Calu3 (cell line): ENCODE measurements at regions of chr1 and their contacts with region 1.

Region 1: GRCh38 chr1:201019321-201019977 is 4.1 kb downstream of the KIF21B start:
- DNase-seq: peak; percentile 83
- H3K4me3 Mint-ChIP-seq: peak overlapping the region; percentile 26
- H3K27ac Mint-ChIP-seq: peak overlapping the region; percentile 94
- H3K4me1 Mint-ChIP-seq: peaks cover 72% of the 10 kb centered on the region
- H3K27me3 Mint-ChIP-seq: no peaks in the 10 kb centered on the region
- CTCF ChIP-seq: no peak

Region 2: GRCh38 chr1:200780545-200781369 is 238.7 kb before region 1 on chr1:
- CTCF ChIA-PET with region 1: no interaction called
- intact Hi-C with region 1: no loop called
- DNase-seq: no peak
- H3K4me3 Mint-ChIP-seq: no peak overlapping the region
- H3K27ac Mint-ChIP-seq: no peak overlapping the region
- H3K4me1 Mint-ChIP-seq: peaks cover 12% of the 10 kb centered on the region
- H3K27me3 Mint-ChIP-seq: no peaks in the 10 kb centered on the region
- CTCF ChIP-seq: no peak

Region 3: DNA sequence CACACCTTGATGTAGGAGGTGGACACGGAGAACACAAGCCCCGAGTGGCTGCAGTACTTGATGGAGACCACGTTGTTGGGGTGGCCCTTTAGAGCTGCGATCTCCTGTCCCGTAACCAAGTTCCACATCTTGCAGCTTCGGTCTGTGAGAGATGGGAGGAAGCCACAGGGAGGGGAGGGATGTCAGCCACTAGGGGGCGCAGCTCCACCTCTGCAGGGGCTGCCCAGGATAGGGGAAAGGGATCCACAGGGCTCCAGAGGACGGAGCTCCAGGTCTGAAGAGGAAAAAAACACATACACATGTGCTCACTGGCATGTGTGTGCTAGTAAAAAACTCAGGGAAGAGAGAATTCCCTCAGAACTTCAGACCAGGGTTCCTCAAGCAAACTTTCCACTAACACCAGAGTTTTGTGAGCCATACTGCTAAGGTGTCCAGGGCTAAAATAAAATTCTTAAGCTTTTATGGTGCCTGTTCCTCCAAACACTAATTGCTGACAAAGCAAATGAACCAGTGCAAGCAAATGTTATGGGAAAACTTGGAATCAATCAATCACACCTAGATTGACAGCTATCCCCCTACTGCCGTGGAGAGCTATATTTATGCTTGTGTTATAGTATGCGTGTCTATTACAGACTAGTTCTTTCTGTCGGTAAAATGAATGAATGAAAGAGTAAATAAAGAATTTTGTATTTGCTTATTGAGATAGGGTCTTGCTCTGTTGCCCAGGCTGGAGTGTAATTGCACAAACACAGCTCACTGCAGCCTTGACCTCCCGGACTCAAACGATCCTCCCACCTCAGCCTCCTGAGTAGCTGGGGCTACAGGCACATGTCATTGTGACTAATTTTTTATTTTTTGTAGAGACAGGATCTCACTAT is 39.6 kb before region 1 on chr1:
- CTCF ChIA-PET with region 1: interaction called, 10 read pairs
- intact Hi-C with region 1: no loop called
- DNase-seq: peak; percentile 49
- H3K4me3 Mint-ChIP-seq: no peak overlapping the region
- H3K27ac Mint-ChIP-seq: no peak overlapping the region
- H3K4me1 Mint-ChIP-seq: no peaks in the 10 kb centered on the region
- H3K27me3 Mint-ChIP-seq: no peaks in the 10 kb centered on the region
- CTCF ChIP-seq: peak; percentile 74